Breast epithelium (tissue), 4 donors: ENCODE measurements at regions of chr11 and their contacts with region 1.

Region 1: GRCh38 chr11:1889224-1890120 is 2.2 kb downstream of the PRR33 start:
- DNase-seq: no peak
- H3K4me3 ChIP-seq: no peak overlapping the region
- H3K27ac ChIP-seq: peak overlapping the region in 1 of 2 donors; percentile 88
- H3K4me1 ChIP-seq: peaks cover 0 to 5% of the 10 kb centered on the region in 2 donors
- H3K27me3 ChIP-seq: peaks cover 0 to 4% of the 10 kb centered on the region in 2 donors
- CTCF ChIP-seq: no peak
- POLR2A ChIP-seq: no peak

Region 2: DNA sequence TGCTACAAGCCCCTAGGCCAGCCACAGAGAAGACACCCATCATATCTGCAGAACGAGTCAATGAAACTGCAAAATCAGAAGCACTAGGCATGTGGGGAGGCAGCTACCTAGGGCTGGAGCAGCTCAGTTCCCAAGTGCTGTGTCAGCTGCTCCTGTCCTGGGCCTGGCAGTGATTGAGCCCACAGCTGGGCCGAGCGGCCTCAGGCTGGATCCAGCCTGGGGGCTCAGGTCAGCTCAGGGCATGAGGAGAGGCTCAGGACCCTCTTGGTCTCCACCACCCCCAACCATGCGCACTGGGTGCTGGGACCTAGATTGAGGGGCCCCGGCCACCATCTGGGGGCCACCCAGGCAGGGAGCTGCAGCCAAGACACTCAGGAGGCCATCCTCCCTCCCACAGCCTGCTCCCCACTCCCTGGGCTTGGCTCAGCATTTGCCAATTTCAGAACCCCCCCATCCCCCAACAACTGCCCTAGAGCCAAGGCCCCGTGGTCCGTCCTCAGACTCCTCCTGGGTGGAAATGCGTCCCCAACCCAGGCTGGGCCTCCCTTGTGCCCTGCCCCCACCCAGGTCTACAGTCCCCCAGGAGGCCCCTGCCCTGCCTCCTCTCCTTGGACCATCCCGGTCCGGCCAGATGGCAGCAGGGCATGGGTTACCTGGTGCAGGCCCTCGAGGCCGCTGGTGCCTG is 27.7 kb after region 1 on chr11:
- intact Hi-C with region 1: loop called (anchors 1 kb)
- DNase-seq: no peak
- H3K4me3 ChIP-seq: no peak overlapping the region
- H3K27ac ChIP-seq: peak overlapping the region in 1 of 2 donors; percentile 78
- H3K4me1 ChIP-seq: no peaks in the 10 kb centered on the region
- H3K27me3 ChIP-seq: no peaks in the 10 kb centered on the region
- CTCF ChIP-seq: no peak
- POLR2A ChIP-seq: no peak

Region 3: DNA sequence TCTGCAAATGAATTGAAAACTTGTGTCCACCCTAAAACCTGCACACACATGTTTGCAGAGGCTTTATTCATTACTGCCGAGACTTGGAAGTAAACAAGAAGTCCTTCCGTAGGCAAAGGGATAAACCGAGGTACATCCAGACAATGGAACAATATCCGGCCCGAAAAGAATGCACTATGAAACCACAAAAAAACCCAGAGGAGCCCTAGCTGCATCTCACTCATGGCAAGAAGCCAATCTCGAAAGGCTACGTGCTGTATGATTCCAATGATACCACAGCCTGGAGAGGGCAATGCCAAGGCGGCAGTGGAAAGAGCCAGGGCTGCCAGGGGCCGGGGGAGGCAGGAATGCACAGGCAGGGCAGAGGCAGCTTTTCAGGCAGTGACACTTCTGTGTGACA is 54.5 kb after region 1 on chr11:
- intact Hi-C with region 1: loop called (anchors 10 kb)
- DNase-seq: peak in 1 of 2 donors; percentile 38
- H3K4me3 ChIP-seq: peak overlapping the region in 2 of 3 donors; percentile 11 to 40
- H3K27ac ChIP-seq: peak overlapping the region; percentile 4 to 32
- H3K4me1 ChIP-seq: peaks cover 0 to 6% of the 10 kb centered on the region in 2 donors
- H3K27me3 ChIP-seq: no peaks in the 10 kb centered on the region
- CTCF ChIP-seq: no peak
- POLR2A ChIP-seq: no peak